Ascending aorta (tissue), 2 donors: ENCODE measurements at regions of chr1 and their contacts with region 1.

Region 1: GRCh38 chr1:32989160-32990050 is 24.8 kb upstream of the RNF19B start:
- DNase-seq: peak; percentile 71 to 93
- H3K4me3 ChIP-seq: no peak overlapping the region
- H3K27ac ChIP-seq: peak overlapping the region; percentile 75 to 77
- H3K4me1 ChIP-seq: peaks cover 0 to 29% of the 10 kb centered on the region in 2 donors
- H3K27me3 ChIP-seq: no peaks in the 10 kb centered on the region
- CTCF ChIP-seq: no peak

Region 2: GRCh38 chr1:32426489-32427255 is 562.7 kb before region 1 on chr1:
- intact Hi-C with region 1: no loop called
- DNase-seq: no peak
- H3K4me3 ChIP-seq: peak overlapping the region; percentile 31 to 33
- H3K27ac ChIP-seq: no peak overlapping the region
- H3K4me1 ChIP-seq: peaks cover 0 to 7% of the 10 kb centered on the region in 2 donors
- H3K27me3 ChIP-seq: no peaks in the 10 kb centered on the region
- CTCF ChIP-seq: no peak

Region 3: DNA sequence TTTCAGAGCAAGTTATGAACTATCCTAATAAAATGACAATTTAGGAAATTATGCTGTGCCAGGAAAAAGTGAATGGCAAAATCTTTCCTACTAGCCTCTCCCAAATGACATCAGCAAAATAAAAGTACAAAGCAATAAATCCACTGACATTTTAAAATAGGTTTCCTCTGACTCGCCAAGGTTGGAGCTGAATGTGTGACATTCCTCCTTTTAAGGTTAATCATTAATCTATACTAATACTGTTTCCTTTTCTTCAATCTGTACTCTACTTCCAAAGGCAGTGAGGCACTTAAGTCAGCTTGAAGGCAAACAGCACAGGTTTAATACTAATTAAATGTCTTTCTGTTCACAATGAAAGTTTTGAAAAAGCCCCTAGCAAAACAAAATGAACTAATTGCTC is 40.5 kb before region 1 on chr1:
- intact Hi-C with region 1: loop called (anchors 5 kb)
- DNase-seq: no peak
- H3K4me3 ChIP-seq: no peak overlapping the region
- H3K27ac ChIP-seq: peak overlapping the region; percentile 71 to 79
- H3K4me1 ChIP-seq: peaks cover 13 to 42% of the 10 kb centered on the region in 2 donors
- H3K27me3 ChIP-seq: no peaks in the 10 kb centered on the region
- CTCF ChIP-seq: no peak

Region 4: GRCh38 chr1:33036526-33037503 is 47.4 kb after region 1 on chr1 and contains the start of gene AK2:
- intact Hi-C with region 1: loop called (anchors 5 kb)
- DNase-seq: peak; percentile 90 to 98
- H3K4me3 ChIP-seq: peak within 1 kb of the TSS; percentile 79 to 93
- H3K27ac ChIP-seq: peak within 1 kb of the TSS; percentile 65 to 68
- H3K4me1 ChIP-seq: peaks cover 0 to 18% of the 10 kb centered on the region in 2 donors
- H3K27me3 ChIP-seq: no peaks in the 10 kb centered on the region
- CTCF ChIP-seq: no peak
- total RNA-seq, gene AK2: 68.4 TPM